ENCODE measurements at regions of chr9 and their contacts with region 1.

Region 1: GRCh38 chr9:91422758-91423711 is 597 bp downstream of the NFIL3 start:
- DNase-seq: peak; percentile 82
- ATAC-seq: peak; percentile 29

Region 2: GRCh38 chr9:91036826-91037510 is 386.1 kb before region 1 on chr9:
- intact Hi-C with region 1: loop called (anchors 2 kb)
- DNase-seq: peak; percentile 87
- ATAC-seq: peak; percentile 95

Region 3: GRCh38 chr9:91085517-91086291 is 337.3 kb before region 1 on chr9:
- intact Hi-C with region 1: no loop called
- DNase-seq: no peak
- ATAC-seq: no peak

Region 4: GRCh38 chr9:91193658-91194391 is 229.2 kb before region 1 on chr9:
- intact Hi-C with region 1: loop called (anchors 2 kb)
- DNase-seq: peak; percentile 95
- ATAC-seq: peak; percentile 72

Region 5: DNA sequence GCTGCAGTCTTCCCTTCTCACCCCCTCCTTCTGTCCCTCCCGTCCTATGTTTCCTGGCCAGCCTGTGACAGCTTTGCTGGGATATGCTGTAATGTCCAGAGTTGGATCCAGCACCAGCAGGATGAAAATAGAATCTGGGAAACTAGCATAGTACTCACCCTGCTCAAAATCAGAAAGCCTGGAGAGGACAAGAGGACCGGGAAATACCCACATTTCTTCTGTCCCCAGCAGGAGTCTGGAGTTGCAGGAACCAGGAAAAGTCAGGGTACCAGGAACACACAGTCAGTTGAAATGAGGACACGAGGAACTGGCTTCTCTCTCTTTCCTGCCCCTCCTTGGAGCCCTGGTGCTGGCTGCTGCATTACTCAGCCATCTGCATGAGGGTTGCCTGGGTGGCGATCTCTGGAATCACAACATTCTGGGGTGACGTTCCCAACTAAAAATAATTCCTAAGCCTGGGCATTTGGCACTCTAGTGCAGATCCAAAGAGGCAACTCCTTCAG is 60.2 kb after region 1 on chr9:
- intact Hi-C with region 1: loop called (anchors 5 kb)
- DNase-seq: peak; percentile 66
- ATAC-seq: peak; percentile 90

Region 6: GRCh38 chr9:91560285-91560684 is 137.2 kb after region 1 on chr9:
- intact Hi-C with region 1: no loop called
- DNase-seq: no peak
- ATAC-seq: no peak